Naive thymus-derived CD4-positive, alpha-beta T cell (primary cell): ENCODE measurements at regions of chr2 and their contacts with region 1.

Region 1: DNA sequence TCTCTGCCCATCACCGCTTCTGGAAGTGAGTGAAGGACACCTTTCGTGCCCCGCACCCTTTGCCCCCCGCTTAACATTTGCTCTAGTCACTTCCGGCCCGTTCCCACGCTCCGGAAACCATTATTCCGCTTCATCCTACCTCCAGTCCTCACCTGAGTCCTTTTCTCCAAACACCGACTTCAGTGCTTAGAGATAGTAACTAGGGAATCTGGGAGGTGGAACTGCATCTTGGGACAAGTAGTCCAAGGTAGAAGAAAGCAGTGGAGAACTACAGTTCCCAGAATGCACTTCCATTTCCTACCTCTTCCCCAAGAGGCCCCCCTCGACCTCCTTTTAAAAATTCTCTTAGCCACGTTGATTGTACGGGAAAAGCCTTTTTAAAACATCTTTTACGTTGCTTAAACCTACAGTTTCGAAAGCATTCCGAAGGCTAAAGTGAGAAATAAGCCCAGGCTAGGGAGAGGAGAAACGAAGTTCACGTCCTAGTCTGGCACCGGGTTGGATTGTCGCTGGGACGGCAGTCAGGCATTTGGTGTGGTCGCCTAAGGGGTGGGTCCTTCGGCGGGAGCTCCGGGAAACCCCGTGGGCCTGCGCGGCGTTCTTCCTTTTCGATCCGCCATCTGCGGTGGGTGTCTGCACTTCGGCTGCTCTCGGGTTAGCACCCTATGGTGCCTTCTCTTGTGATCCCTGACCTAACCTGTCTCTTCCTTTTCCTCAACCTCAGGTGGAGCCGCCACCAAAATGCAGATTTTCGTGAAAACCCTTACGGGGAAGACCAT is at the starts of genes CLHC1 and RPS27A:
- DNase-seq: peak; percentile 90 to 97 (median 93)
- ATAC-seq: peak; percentile 95
- H3K4me3 ChIP-seq: peak within 1 kb of the TSS; percentile 75
- H3K4me3 Mint-ChIP-seq: peak within 1 kb of the TSS; percentile 96 to 100 (median 100)
- H3K27ac ChIP-seq: peak within 1 kb of the TSS; percentile 99
- H3K27ac Mint-ChIP-seq: peak within 1 kb of the TSS; percentile 96 to 99 (median 99)
- H3K4me1 ChIP-seq: peaks cover 26 to 30% of the 10 kb centered on the region in 2 donors
- H3K4me1 Mint-ChIP-seq: peaks cover 41 to 84% (median 63%) of the 10 kb centered on the region in 7 donors
- H3K27me3 ChIP-seq: no peaks in the 10 kb centered on the region
- H3K27me3 Mint-ChIP-seq: no peaks in the 10 kb centered on the region
- total RNA-seq, gene CLHC1: 5.3 to 19.5 (median 15.1) TPM
- total RNA-seq, gene RPS27A: 948 to 2,409 (median 2,155) TPM

Region 2: DNA sequence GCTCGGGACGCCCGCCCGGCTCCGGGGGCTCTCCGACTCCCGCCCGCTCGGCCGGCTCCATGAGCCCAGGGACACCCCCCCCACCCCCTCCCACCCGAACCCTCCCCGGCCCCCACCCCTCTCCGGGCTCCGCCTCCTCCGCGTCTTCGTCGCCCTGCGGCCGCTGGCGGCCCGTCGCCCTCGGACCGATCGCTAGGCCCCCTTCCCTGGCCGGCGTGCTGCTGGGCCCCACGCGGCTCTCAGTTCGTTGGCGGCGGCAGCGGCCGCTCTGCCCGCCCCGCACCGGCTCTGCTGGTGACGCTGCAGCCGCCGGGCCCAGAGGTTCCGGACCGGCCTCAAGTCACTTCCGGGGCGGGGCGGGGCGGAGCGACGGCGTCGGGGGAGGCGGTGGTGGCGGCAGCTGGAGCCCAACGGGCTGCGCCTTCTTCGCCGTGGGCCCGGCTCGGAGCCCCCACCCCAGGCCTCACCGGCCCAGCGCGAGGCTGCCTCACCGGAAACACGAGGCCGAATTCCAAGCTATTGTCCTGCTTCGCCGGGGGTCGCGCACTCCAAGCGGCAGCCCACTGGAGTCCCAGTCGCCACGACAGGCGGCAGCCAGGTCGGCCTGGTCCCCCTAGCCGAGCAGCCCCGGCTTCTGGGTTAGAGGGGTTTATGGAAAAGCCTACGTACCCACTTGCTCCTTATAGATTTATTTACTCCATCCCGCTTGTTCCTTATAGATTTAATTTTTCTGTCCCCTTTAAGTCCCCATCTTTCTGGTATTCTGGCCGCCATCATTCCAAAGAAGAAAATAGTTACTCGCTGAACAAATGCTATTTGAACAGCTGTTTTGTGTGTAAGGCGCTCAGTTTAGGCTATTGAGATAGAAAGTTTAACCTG is 1261.3 kb before region 1 on chr2 and contains the start of gene PSME4:
- CTCF ChIA-PET with region 1: no interaction called
- POLR2A ChIA-PET with region 1: no interaction called
- intact Hi-C with region 1: loop called in 1 of 2 experiments (anchors 2 kb)
- DNase-seq: peak; percentile 80 to 95 (median 90)
- ATAC-seq: peak; percentile 97
- H3K4me3 ChIP-seq: peak within 1 kb of the TSS; percentile 84
- H3K4me3 Mint-ChIP-seq: peak within 1 kb of the TSS; percentile 89 to 100 (median 96)
- H3K27ac ChIP-seq: peak within 1 kb of the TSS; percentile 93
- H3K27ac Mint-ChIP-seq: peak within 1 kb of the TSS; percentile 91 to 99 (median 95)
- H3K4me1 ChIP-seq: peaks cover 17 to 21% of the 10 kb centered on the region in 2 donors
- H3K4me1 Mint-ChIP-seq: peaks cover 37 to 65% (median 54%) of the 10 kb centered on the region in 7 donors
- H3K27me3 ChIP-seq: no peaks in the 10 kb centered on the region
- H3K27me3 Mint-ChIP-seq: no peaks in the 10 kb centered on the region
- total RNA-seq, gene PSME4: 48.8 to 80.1 (median 54.4) TPM

Region 3: GRCh38 chr2:54570925-54571694 is 661.2 kb before region 1 on chr2:
- CTCF ChIA-PET with region 1: no interaction called
- POLR2A ChIA-PET with region 1: no interaction called
- intact Hi-C with region 1: loop called in 1 of 2 experiments (anchors 5 kb)
- DNase-seq: peak in 8 of 9 donors; percentile 61 to 84 (median 68)
- ATAC-seq: peak; percentile 24
- H3K4me3 ChIP-seq: peak overlapping the region; percentile 58
- H3K4me3 Mint-ChIP-seq: peak overlapping the region; percentile 72 to 94 (median 88)
- H3K27ac ChIP-seq: peak overlapping the region; percentile 95
- H3K27ac Mint-ChIP-seq: peak overlapping the region; percentile 90 to 99 (median 97)
- H3K4me1 ChIP-seq: peaks cover 76 to 91% of the 10 kb centered on the region in 2 donors
- H3K4me1 Mint-ChIP-seq: peaks cover 68 to 100% (median 93%) of the 10 kb centered on the region in 7 donors
- H3K27me3 ChIP-seq: no peaks in the 10 kb centered on the region
- H3K27me3 Mint-ChIP-seq: no peaks in the 10 kb centered on the region

Region 4: GRCh38 chr2:55133467-55134315 is 98.6 kb before region 1 on chr2:
- CTCF ChIA-PET with region 1: no interaction called
- POLR2A ChIA-PET with region 1: interaction called, 5 read pairs
- intact Hi-C with region 1: loop called in 1 of 2 experiments (anchors 1 kb)
- DNase-seq: peak; percentile 17 to 78 (median 52)
- ATAC-seq: peak; percentile 91
- H3K4me3 ChIP-seq: peak overlapping the region; percentile 55
- H3K4me3 Mint-ChIP-seq: peak overlapping the region; percentile 83 to 94 (median 88)
- H3K27ac ChIP-seq: peak overlapping the region; percentile 76
- H3K27ac Mint-ChIP-seq: peak overlapping the region; percentile 91 to 98 (median 97)
- H3K4me1 ChIP-seq: peaks cover 14 to 22% of the 10 kb centered on the region in 2 donors
- H3K4me1 Mint-ChIP-seq: peaks cover 19 to 49% (median 39%) of the 10 kb centered on the region in 7 donors
- H3K27me3 ChIP-seq: no peaks in the 10 kb centered on the region
- H3K27me3 Mint-ChIP-seq: no peaks in the 10 kb centered on the region

Region 5: GRCh38 chr2:55419679-55420438 is 187.6 kb after region 1 on chr2 and contains the start of gene CCDC88A:
- CTCF ChIA-PET with region 1: no interaction called
- POLR2A ChIA-PET with region 1: interaction called, 3 read pairs
- intact Hi-C with region 1: loop called (anchors 1 to 5 kb)
- DNase-seq: peak; percentile 78 to 91 (median 85)
- ATAC-seq: peak; percentile 92
- H3K4me3 ChIP-seq: peak within 1 kb of the TSS; percentile 91
- H3K4me3 Mint-ChIP-seq: peak within 1 kb of the TSS; percentile 86 to 98 (median 94)
- H3K27ac ChIP-seq: peak within 1 kb of the TSS; percentile 69
- H3K27ac Mint-ChIP-seq: peak within 1 kb of the TSS; percentile 50 to 97 (median 85)
- H3K4me1 ChIP-seq: peaks cover 0 to 6% of the 10 kb centered on the region in 2 donors
- H3K4me1 Mint-ChIP-seq: peaks cover 5 to 49% (median 41%) of the 10 kb centered on the region in 7 donors
- H3K27me3 ChIP-seq: no peaks in the 10 kb centered on the region
- H3K27me3 Mint-ChIP-seq: peaks cover 0 to 40% (median 0%) of the 10 kb centered on the region in 5 donors
- total RNA-seq, gene CCDC88A: 9.9 to 53.3 (median 15.9) TPM